ENCODE measurements at regions of chr1 and their contacts with region 1.

Region 1: DNA sequence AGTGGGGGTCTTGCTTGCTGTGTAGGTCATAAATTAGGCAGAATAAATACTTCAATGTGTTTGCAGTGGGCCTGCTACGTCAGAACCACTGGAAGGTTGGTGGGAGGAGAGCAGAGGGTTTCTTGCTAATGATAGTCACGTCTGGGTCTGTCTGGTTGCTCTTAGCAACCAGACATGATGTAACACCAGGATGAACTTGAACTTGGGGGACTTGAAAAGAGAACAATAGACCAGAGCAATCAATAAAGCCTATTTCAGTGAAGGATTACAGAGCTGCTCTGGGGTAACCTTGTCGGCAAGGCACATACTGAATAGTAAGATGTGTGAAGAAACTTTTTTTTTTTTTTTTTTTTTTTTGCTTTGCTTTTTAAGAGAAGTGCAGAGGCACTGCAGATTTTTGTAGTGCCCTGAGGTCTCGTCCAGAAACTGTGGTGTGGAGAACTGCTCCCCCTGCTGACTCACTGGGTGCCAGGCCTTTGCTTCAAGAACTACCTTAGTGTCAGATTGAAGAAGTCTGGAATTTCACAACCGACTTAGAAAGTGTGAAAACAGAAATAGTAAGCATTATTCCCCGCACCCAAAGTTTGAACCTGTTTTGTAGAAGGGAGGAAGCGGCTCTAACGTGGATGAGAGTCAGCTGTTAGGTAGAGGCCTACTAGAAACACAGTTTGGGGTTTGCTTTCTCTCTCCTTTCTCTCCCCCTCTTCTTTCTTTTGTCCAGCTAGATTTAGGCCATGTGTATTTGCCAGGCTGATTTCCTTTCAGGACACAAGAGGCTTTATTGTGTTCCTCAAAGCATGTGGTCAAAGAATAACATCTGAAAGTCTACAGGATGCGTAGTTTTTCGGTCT is 271.6 kb downstream of the TM2D1 start:
- DNase-seq: peak; percentile 66
- ATAC-seq: peak; percentile 54
- H3K4me3 ChIP-seq: no peak overlapping the region
- H3K4me3 Mint-ChIP-seq: no peak overlapping the region
- H3K27ac ChIP-seq: no peak overlapping the region
- H3K27ac Mint-ChIP-seq: no peak overlapping the region
- H3K4me1 ChIP-seq: peaks cover 0 to 4% of the 10 kb centered on the region in 2 donors
- H3K4me1 Mint-ChIP-seq: peaks cover 3% of the 10 kb centered on the region
- H3K27me3 ChIP-seq: no peaks in the 10 kb centered on the region
- H3K27me3 Mint-ChIP-seq: peaks cover 4% of the 10 kb centered on the region
- CTCF ChIP-seq: peak; percentile 62

Region 2: DNA sequence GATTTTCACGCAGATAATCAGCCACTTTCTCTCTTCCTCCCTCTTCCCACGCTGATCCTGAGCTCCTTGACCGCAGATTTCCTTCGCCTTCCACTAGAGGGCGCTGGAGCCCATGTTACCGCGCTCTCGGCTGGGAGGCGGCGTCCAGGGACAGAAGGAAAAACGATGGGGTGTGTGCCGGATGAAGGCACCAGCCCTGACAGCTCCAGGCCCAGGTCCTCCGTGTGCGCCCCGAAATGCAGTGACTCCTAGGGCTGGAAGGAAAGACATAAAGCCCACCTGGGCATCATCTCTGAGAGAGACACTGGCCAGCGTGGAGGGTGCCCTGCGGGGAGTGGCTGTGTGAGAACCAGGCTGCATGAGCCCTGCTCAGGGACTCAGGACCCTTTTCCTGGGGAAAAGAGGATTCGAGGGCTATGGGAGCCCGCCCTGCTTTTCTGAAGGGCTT is 1481.8 kb before region 1 on chr1:
- CTCF ChIA-PET with region 1: interaction called, 27 read pairs
- POLR2A ChIA-PET with region 1: no interaction called
- intact Hi-C with region 1: no loop called
- DNase-seq: peak; percentile 49
- ATAC-seq: no peak
- H3K4me3 ChIP-seq: no peak overlapping the region
- H3K4me3 Mint-ChIP-seq: no peak overlapping the region
- H3K27ac ChIP-seq: no peak overlapping the region
- H3K27ac Mint-ChIP-seq: no peak overlapping the region
- H3K4me1 ChIP-seq: peaks cover 3 to 5% of the 10 kb centered on the region in 2 donors
- H3K4me1 Mint-ChIP-seq: peaks cover 5% of the 10 kb centered on the region
- H3K27me3 ChIP-seq: peaks cover 0 to 8% (median 3%) of the 10 kb centered on the region in 4 experiments
- H3K27me3 Mint-ChIP-seq: peaks cover 34% of the 10 kb centered on the region
- CTCF ChIP-seq: peak; percentile 80

Region 3: DNA sequence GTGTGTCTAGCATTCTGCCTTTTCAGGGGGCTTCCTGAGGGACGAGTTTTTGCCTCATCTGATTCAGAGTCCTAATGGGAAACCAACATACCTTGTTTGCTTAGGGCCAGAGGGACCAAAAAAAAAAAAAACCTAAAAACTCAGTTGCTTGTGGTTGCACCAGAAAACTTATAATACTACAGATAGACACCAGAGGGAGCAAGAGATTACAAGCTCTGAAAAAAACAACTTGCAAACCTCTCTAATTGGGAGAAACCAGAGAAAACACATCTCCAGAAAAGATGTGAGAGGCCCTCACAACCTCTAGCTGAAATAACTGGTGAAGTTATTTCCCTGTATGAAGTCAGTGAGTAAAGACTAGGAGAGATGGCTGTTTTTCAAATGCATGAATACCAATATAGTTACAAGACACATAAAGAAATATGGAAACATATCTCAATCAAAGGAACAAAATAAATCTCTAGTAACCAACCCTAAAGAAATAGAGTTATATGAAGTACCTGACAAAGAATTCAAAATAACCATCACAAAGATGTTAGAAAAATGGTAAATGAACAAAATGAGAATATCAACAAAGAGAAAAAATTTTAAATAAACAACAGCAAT is 604.6 kb before region 1 on chr1:
- CTCF ChIA-PET with region 1: interaction called, 11 read pairs
- POLR2A ChIA-PET with region 1: no interaction called
- intact Hi-C with region 1: loop called (anchors 2 kb)
- DNase-seq: no peak
- ATAC-seq: no peak
- H3K4me3 ChIP-seq: no peak overlapping the region
- H3K4me3 Mint-ChIP-seq: no peak overlapping the region
- H3K27ac ChIP-seq: no peak overlapping the region
- H3K27ac Mint-ChIP-seq: no peak overlapping the region
- H3K4me1 ChIP-seq: no peaks in the 10 kb centered on the region
- H3K4me1 Mint-ChIP-seq: no peaks in the 10 kb centered on the region
- H3K27me3 ChIP-seq: no peaks in the 10 kb centered on the region
- H3K27me3 Mint-ChIP-seq: peaks cover 3% of the 10 kb centered on the region
- CTCF ChIP-seq: peak; percentile 24

Region 4: DNA sequence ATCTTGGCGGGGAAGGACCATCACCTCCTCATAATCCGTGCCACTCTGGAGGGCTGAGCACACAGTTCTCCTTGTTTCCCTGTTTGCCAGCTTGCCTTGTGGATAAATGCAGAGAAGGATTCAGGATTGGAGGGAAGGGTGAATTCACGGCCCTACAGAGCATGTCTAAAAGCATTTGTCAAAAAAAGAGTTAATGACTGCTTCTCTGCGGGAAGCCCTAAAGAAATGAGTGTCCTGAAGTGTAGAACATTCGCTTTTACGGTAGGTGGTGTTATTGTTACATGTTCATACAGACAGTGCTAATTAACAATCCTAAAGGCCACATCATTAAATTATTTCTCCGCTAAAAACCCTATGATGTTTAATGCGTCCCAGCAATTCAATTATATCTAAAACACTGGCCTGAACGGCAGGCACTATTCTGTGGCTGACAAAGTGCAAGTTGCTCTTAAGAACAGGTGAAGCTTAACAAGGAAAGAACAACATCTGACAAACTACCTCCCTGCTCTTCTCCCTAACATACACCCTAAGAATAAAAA is 483.3 kb before region 1 on chr1:
- CTCF ChIA-PET with region 1: interaction called, 3 read pairs
- POLR2A ChIA-PET with region 1: no interaction called
- intact Hi-C with region 1: loop called (anchors 2 kb)
- DNase-seq: no peak
- ATAC-seq: no peak
- H3K4me3 ChIP-seq: no peak overlapping the region
- H3K4me3 Mint-ChIP-seq: no peak overlapping the region
- H3K27ac ChIP-seq: no peak overlapping the region
- H3K27ac Mint-ChIP-seq: no peak overlapping the region
- H3K4me1 ChIP-seq: no peaks in the 10 kb centered on the region
- H3K4me1 Mint-ChIP-seq: no peaks in the 10 kb centered on the region
- H3K27me3 ChIP-seq: no peaks in the 10 kb centered on the region
- H3K27me3 Mint-ChIP-seq: no peaks in the 10 kb centered on the region
- CTCF ChIP-seq: no peak

Region 5: DNA sequence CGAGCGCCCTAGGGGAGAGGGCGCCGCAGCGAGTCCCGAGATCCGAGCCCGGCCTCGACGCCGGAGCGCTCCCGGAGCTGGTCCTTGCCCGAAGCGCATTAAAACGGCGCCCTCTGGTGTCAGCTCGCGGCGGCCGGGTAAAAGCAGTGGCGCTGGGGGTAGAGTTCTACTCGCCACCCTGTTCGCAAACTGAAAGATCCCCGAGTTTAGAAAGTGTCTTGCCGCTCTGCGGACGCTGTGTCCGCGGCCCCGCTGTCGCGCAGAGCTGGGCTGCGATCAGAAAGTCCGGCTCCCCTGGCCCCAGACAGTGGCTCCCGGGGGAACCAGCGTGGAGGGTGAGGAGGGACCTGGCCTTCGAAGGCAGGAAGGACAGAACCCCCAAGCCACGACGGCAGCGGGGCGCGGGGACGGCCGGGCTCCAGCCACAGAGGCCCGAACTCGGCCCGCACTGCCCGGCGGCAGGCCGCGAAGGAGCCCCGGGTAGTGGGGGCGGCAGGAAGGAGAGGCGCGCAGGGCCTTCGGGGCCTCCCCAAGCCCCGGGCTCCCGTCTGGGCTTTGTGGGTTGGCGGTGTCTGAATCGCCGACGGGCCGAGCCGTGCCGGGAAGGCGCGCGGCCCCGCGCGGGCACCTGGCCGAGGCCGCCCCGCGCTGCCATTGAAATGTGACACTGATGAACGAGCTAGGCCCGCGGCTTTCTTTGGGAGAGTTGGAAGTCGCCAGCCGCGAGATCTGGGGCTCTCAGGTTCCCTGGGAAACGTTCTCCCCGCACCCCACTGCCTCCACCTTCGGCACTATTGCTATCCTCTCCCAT is 410.1 kb before region 1 on chr1:
- CTCF ChIA-PET with region 1: interaction called, 6 read pairs
- POLR2A ChIA-PET with region 1: no interaction called
- intact Hi-C with region 1: loop called (anchors 2 kb)
- DNase-seq: peak; percentile 76
- ATAC-seq: peak; percentile 74
- H3K4me3 ChIP-seq: peak overlapping the region in 4 of 5 experiments; percentile 22 to 45 (median 42)
- H3K4me3 Mint-ChIP-seq: peak overlapping the region; percentile 74
- H3K27ac ChIP-seq: no peak overlapping the region
- H3K27ac Mint-ChIP-seq: no peak overlapping the region
- H3K4me1 ChIP-seq: peaks cover 9 to 14% of the 10 kb centered on the region in 2 donors
- H3K4me1 Mint-ChIP-seq: peaks cover 5% of the 10 kb centered on the region
- H3K27me3 ChIP-seq: peaks cover 0 to 36% (median 25%) of the 10 kb centered on the region in 4 experiments
- H3K27me3 Mint-ChIP-seq: peaks cover 58% of the 10 kb centered on the region
- CTCF ChIP-seq: peak; percentile 81

Region 6: DNA sequence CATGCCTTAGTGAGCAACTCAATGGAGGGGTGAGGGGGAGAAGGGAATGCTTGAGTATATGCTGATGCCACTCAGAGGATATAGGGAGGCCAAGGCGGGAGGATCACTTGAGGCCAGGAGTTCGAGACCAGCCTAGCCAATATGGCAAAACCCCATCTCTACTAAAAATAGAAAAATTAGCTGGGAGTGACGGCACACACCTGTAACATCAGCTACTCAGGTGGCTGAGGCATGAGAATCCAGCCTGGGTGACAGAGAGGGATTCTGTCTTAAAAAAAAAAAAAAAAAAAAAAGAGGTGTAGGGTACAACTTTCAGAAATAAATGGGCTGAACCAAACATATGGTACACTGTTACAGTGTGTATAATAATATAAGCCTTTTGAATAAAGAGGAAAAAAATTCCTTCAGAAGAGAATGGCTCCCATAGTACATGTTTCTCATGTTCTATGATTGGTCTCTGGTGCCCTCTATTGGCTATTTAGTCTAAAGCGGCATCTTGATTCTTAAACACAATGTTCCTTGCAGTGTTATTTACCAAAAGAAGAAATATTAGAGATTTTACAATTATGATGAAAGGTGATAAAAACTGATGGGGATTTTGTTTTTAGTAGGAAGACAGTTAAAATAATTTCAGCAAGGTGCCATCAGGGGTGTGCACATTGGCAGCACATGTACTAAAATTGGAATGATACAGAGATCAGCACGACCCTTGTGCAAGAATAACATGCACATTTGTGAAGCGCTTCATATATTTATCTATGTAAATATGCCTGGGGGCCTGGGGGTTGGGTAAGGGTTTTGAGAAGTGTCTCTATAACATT is 398.7 kb after region 1 on chr1:
- CTCF ChIA-PET with region 1: no interaction called
- POLR2A ChIA-PET with region 1: no interaction called
- intact Hi-C with region 1: loop called (anchors 5 kb)
- DNase-seq: peak; percentile 59
- ATAC-seq: no peak
- H3K4me3 ChIP-seq: no peak overlapping the region
- H3K4me3 Mint-ChIP-seq: no peak overlapping the region
- H3K27ac ChIP-seq: no peak overlapping the region
- H3K27ac Mint-ChIP-seq: no peak overlapping the region
- H3K4me1 ChIP-seq: no peaks in the 10 kb centered on the region
- H3K4me1 Mint-ChIP-seq: no peaks in the 10 kb centered on the region
- H3K27me3 ChIP-seq: no peaks in the 10 kb centered on the region
- H3K27me3 Mint-ChIP-seq: no peaks in the 10 kb centered on the region
- CTCF ChIP-seq: peak; percentile 86

Measured in B cell (primary cell).